WTC11 (cell line): ENCODE measurements at regions of chr6 and their contacts with region 1.

Region 1: DNA sequence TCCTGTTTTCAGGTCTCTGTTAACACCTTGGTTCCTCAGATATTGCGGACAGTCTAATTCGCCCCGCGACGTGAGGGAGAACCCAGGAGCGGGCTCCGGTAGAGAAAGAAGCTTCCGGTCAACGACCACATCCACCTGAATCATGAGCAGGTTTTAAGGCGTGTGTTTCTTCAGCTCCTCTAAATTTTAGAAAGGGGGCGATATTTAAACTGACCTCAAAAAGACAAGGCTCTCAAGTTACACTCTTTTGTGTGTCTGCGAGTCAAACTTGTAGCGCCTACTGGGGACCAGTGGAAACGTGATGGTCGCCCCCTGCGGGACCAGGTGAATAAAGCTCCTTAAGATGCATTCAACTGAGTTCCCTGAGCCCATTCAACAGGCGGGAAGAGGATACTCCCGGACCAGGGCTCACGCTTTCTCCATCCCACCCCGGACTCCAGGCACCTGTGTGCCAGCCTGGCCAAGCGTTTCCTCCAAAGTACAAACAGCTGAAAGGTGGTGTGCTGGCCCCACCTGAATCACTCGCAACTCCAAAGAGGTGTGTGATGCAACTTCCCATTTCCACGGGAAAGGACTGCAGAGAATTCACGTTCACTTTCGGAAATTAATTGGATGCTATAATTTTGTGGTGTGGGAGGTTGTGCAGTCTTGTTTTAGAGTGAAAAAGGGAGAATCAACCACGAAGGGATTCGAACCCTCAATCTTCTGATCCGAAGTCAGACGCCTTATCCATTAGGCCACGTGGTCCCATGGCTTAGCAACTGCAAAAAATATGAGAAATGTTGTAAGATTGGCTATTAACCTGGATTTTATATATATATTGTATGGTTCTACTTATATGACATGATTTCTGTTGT is 17.0 kb downstream of the GPX5 start:
- DNase-seq: peak; percentile 95
- ATAC-seq: peak; percentile 88
- H3K4me3 Mint-ChIP-seq: peak overlapping the region; percentile 90
- H3K27ac Mint-ChIP-seq: peak overlapping the region; percentile 99
- H3K4me1 Mint-ChIP-seq: peaks cover 23% of the 10 kb centered on the region
- H3K27me3 Mint-ChIP-seq: peaks cover 10% of the 10 kb centered on the region
- CTCF ChIP-seq: peak; percentile 40; the same call in 1 of the 2 replicates

Region 2: DNA sequence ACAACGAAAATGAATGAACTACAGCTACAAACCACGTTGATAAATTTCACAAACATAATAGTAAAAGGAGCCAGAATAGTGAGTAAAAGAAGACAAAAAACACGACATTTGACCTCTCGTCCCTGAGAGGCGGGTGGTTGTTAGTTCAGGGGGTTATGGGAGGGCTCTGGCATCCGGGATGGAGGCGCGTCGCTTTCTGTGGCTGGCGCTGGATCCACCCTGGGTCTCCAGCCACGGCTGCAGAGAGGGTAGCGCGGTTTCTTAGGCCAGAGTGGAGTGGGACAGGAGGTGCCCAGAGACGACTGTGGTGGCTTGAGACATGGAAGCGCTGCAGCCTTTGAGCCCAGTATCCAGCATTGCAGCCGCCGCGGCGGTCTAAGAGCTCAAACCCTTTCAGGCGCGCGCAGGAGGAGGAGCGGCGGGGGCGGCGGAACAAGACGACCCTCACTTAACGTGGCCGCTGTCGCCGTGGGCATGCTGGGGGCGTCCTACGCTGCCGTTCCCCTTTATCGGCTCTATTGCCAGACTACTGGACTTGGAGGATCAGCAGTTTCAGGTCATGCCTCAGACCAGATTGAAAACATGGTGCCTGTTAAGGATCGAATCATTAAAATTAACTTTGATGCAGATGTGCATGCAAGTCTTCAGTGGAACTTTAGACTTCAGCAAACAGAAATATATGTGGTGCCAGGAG is 95.7 kb before region 1 on chr6:
- CTCF ChIA-PET with region 1: interaction called, 10 read pairs
- POLR2A ChIA-PET with region 1: no interaction called
- DNase-seq: peak; percentile 47
- ATAC-seq: peak; percentile 61
- H3K4me3 Mint-ChIP-seq: peak overlapping the region; percentile 86
- H3K27ac Mint-ChIP-seq: peak overlapping the region; percentile 23
- H3K4me1 Mint-ChIP-seq: peaks cover 16% of the 10 kb centered on the region
- H3K27me3 Mint-ChIP-seq: peaks cover 9% of the 10 kb centered on the region
- CTCF ChIP-seq: no peak

Region 3: GRCh38 chr6:28496099-28496779 is 46.4 kb before region 1 on chr6:
- CTCF ChIA-PET with region 1: interaction called, 11 read pairs
- POLR2A ChIA-PET with region 1: no interaction called
- DNase-seq: no peak
- ATAC-seq: no peak
- H3K4me3 Mint-ChIP-seq: no peak overlapping the region
- H3K27ac Mint-ChIP-seq: no peak overlapping the region
- H3K4me1 Mint-ChIP-seq: peaks cover 8% of the 10 kb centered on the region
- H3K27me3 Mint-ChIP-seq: no peaks in the 10 kb centered on the region; the same call in 1 of the 2 replicates
- CTCF ChIP-seq: no peak

Region 4: DNA sequence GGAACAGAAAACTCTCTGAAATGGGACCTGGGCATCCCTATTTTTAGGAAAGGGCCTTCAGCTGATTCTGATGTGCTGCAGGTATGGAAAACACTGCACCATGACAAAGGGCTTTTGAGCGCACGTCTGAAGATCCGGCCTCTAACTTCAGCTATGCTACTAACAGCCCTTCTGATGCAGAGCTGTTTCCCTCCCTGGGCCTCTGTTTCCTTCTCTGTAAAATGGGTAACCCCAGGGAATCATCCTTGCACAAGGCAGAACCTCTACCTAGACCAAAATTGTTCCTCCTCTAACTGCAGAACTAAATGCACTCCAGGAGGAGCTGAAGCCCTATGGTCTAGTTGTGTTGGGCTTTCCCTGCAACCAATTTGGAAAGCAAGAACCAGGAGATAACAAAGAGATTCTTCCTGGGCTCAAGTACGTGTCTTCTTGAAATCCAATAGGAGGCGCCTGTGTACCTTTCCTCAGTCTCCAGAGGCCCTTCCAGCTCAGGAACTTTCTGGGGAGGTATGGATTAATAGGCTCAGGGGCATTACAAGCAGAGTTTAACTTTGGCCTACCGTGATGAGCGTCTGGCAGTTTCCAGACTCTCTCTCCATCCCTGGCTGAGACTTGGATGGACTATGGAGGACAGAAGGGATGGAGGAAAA is 11.1 kb before region 1 on chr6:
- CTCF ChIA-PET with region 1: interaction called, 47 read pairs
- POLR2A ChIA-PET with region 1: interaction called, 7 read pairs
- DNase-seq: no peak
- ATAC-seq: peak; percentile 89
- H3K4me3 Mint-ChIP-seq: 0 out of 2 replicates have a peak overlapping the region, but pooled peaks have one; percentile 4
- H3K27ac Mint-ChIP-seq: peak overlapping the region; percentile 65; the same call in 1 of the 2 replicates
- H3K4me1 Mint-ChIP-seq: peaks cover 23% of the 10 kb centered on the region
- H3K27me3 Mint-ChIP-seq: peaks cover 7% of the 10 kb centered on the region
- CTCF ChIP-seq: no peak

Region 5: GRCh38 chr6:28606424-28607400 is 64.0 kb after region 1 on chr6:
- CTCF ChIA-PET with region 1: interaction called, 10 read pairs
- POLR2A ChIA-PET with region 1: interaction called, 3 read pairs
- DNase-seq: peak; percentile 72
- ATAC-seq: peak; percentile 93
- H3K4me3 Mint-ChIP-seq: peak overlapping the region; percentile 82
- H3K27ac Mint-ChIP-seq: no peak overlapping the region
- H3K4me1 Mint-ChIP-seq: peaks cover 6% of the 10 kb centered on the region
- H3K27me3 Mint-ChIP-seq: peaks cover 10% of the 10 kb centered on the region
- CTCF ChIP-seq: no peak

Region 6: GRCh38 chr6:28648035-28648877 is 105.6 kb after region 1 on chr6:
- CTCF ChIA-PET with region 1: interaction called, 10 read pairs
- POLR2A ChIA-PET with region 1: no interaction called
- DNase-seq: peak; percentile 75
- ATAC-seq: peak; percentile 74
- H3K4me3 Mint-ChIP-seq: peak overlapping the region; percentile 98
- H3K27ac Mint-ChIP-seq: no peak overlapping the region
- H3K4me1 Mint-ChIP-seq: peaks cover 6% of the 10 kb centered on the region; the same call in 1 of the 2 replicates
- H3K27me3 Mint-ChIP-seq: no peaks in the 10 kb centered on the region
- CTCF ChIP-seq: no peak